ENCODE measurements at regions of chr17 and their contacts with region 1.

Region 1: DNA sequence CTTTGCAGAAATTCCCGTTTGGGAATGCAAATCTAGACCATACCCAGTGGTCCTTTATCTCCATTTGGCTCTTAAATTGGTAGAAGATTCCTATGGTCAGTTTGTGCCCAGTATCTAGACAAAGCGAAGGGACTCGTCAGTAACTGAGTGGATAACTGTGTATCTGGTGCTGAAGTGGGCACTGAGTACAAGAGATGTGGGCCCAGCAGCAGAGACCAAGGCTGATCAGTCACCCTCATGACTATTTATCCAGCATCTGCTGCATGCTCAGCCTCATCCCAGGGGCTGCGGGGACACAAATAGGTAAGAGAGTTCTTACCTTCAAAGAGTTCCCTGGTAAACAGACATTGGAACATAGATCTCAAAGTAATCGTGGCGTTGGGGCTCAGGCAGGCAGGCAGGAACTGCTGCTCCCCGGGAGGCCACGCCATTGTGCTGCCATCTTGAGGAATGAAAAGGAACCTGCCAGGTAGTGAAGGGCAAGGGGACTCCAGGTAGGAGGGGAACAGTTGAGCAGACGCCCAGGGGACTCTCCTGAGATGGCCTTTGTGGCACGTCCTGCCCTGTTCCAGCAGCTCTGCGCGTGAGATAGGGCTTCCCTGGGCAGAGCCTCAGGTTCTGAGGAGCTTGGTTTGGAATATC is 10.3 kb downstream of the NT5M start:
- DNase-seq: peak; percentile 84
- H3K4me3 Mint-ChIP-seq: no peak overlapping the region
- H3K27ac Mint-ChIP-seq: no peak overlapping the region
- H3K4me1 Mint-ChIP-seq: peaks cover 6% of the 10 kb centered on the region
- H3K27me3 Mint-ChIP-seq: no peaks in the 10 kb centered on the region

Region 2: DNA sequence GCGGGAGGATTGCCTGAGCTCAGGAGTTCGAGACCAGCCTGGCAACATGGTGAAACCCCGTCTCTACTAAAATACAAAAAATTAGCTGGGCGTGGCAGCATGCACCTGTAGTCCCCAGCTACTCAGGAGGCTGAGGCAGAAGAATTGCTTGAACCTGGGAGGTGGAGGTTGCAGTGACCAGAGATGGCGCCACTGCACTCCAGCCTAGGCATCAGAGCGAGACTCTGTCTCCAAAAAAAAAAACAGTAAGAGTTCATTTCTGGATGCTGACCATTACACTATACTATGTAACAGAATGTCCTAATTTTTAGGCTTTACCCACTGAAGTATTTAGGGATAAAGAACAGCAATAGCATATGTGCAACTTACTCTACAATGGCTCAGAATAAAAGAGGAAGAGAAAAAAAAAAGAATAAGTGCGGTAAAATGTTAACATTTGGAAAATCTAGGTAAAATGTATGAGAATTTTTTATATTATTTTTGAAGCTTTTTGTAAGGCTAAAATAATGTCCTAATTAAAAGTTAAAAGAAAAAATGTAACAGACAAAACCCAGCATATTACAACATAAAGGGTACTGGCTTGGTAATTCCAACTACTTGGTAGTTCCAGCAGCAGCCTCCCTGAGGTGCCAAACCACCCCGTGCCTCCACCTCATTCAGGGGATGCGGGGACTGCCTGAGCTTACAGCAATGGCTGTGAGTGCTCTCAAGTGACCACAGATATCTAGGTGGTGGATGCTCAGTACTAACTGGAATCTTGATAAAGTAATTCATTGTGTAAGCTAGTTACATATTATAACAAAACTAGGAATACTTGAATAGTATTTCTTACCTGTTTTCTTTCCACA is 43.3 kb before region 1 on chr17:
- CTCF ChIA-PET with region 1: interaction called, 7 read pairs
- intact Hi-C with region 1: loop called (anchors 5 kb)
- DNase-seq: peak; percentile 46
- H3K4me3 Mint-ChIP-seq: no peak overlapping the region
- H3K27ac Mint-ChIP-seq: no peak overlapping the region
- H3K4me1 Mint-ChIP-seq: no peaks in the 10 kb centered on the region
- H3K27me3 Mint-ChIP-seq: no peaks in the 10 kb centered on the region

Region 3: DNA sequence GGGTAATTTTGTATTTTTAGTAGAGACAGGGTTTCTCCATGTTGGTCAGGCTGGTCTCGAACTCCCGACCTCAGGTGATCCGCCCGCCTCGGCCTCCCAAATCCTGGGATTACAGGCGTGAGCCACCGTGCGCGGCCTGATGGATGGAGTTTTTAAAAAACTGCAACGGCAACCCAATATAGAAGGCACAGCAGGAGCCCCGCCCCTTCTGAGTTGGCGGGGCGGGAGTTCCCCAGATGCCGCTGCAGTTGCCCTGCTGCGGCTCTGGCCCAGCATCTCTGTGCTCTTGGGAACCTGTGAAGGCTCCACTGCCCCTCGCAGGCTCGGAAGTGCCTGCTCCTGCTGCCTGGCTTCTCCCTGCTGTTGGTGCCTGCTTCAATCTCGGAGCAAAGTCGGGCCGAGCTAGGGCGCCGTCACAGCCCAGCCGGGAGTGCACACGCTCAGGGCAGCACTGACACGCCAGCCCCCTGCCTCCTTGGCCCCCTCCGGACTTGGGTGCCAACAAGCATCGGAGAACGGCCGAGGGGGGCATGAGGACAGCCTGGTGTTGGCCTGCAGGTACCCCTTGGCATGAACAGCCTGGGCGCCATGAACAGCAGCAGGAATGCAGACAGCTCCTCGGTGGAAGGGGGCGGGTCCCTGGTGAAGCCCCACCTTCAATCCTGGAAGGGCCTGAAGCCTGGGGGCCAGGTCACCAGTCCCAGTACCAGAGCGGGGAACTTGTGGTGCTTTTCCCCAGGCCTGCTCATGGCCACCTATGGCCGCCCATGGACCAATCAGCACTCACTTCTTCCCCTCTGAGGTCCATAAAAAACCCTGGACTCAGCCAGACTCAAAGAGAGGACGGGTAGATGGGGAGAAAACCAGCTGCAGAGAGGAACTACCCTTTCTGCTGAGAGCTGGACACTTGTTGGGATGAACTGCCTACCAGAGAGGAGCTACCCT is 12.6 kb before region 1 on chr17:
- CTCF ChIA-PET with region 1: no interaction called
- intact Hi-C with region 1: no loop called
- DNase-seq: peak; percentile 72
- H3K4me3 Mint-ChIP-seq: peak overlapping the region; percentile 47
- H3K27ac Mint-ChIP-seq: no peak overlapping the region
- H3K4me1 Mint-ChIP-seq: peaks cover 48% of the 10 kb centered on the region
- H3K27me3 Mint-ChIP-seq: no peaks in the 10 kb centered on the region